ENCODE measurements at regions of chr17 and their contacts with region 1.

Region 1: GRCh38 chr17:38349097-38349730 is 2.4 kb upstream of the SOCS7 start:
- DNase-seq: peak; percentile 56 to 79
- ATAC-seq: peak; percentile 57 to 71
- H3K4me3 ChIP-seq: no peak overlapping the region
- H3K27ac ChIP-seq: peak overlapping the region in 1 of 4 donors; percentile 48
- H3K4me1 ChIP-seq: peaks cover 15 to 16% of the 10 kb centered on the region in 2 donors
- H3K27me3 ChIP-seq: no peaks in the 10 kb centered on the region
- CTCF ChIP-seq: peak; percentile 75 to 93 (median 84)
- POLR2A ChIP-seq: no peak

Region 2: GRCh38 chr17:38397227-38397626 is 48.0 kb after region 1 on chr17:
- in situ Hi-C with region 1: no loop called
- intact Hi-C with region 1: no loop called
- DNase-seq: no peak
- ATAC-seq: no peak
- H3K4me3 ChIP-seq: no peak overlapping the region
- H3K27ac ChIP-seq: no peak overlapping the region
- H3K4me1 ChIP-seq: no peaks in the 10 kb centered on the region
- H3K27me3 ChIP-seq: no peaks in the 10 kb centered on the region
- CTCF ChIP-seq: no peak
- POLR2A ChIP-seq: no peak

Region 3: DNA sequence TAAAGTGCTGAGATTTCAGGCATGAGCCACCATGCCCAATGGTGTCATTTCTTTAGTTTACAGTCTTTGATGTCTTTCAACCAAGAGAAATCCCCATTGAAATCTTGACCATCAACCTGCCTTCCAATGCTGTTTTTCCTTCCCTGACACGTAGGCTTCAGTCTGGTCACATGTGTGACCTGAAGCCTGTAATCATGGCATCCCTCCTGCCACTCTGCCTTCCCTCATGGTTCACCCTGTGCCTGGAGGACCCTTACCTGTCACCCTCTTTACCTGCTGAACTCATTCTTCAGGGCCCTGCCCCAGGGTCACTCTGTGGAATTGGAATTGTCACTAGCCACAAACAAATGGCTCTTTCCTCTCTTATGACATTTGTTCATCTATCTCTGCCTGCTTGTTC is 61.0 kb after region 1 on chr17:
- in situ Hi-C with region 1: loop called (anchors 5 kb)
- intact Hi-C with region 1: loop called (anchors 1 kb)
- DNase-seq: no peak
- ATAC-seq: no peak
- H3K4me3 ChIP-seq: no peak overlapping the region
- H3K27ac ChIP-seq: no peak overlapping the region
- H3K4me1 ChIP-seq: peaks cover under 1 to 8% of the 10 kb centered on the region in 2 donors
- H3K27me3 ChIP-seq: no peaks in the 10 kb centered on the region
- CTCF ChIP-seq: no peak
- POLR2A ChIP-seq: no peak

Region 4: DNA sequence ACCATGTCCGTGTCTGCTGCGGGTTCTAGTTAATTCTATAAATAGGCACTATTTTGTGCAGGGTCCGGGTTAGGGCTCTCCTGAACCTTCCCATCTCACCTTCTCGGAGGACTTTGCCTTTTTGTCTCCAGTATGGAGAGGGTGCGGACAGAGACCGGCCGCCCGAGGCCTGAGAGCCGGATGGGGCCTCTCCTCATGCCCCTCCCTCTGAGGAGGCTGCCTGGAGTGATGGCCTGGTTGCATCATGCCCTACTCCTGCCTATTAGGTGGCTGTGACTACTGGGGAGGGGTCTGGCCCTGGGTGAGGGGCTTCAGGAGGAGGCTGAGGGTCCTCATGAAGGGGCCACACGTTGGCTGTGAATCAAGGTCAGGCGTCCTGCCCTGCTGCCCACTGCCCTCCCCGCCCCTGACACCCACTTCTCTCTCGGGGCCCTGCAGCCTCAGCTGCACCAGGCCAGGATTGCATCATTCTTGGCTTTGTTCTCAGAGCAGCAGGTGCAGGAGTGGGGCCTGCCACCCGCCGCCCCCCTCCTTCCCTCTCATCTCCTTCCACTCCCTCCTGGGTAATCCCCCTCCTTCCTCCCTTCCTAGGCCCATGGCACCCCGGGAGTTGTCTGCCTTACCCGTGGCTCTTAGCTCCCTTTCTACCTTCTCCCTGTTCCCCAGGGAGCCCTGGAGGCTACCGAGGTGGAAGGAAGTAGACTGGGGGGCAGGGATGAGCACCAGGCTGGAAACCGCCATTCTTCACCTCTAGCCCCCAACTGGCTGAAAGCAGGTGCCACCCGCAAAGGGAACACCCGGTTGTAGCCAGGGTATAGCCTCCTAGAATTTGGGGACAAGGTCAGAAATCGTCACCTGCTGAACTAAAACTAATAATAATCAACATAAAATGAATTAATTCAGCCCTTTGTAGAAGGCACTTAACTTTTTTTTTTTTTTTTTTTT is 66.3 kb after region 1 on chr17:
- in situ Hi-C with region 1: loop called (anchors 5 kb)
- intact Hi-C with region 1: loop called (anchors 1 kb)
- DNase-seq: peak in 1 of 2 donors; percentile 55
- ATAC-seq: peak; percentile 59 to 85
- H3K4me3 ChIP-seq: peak overlapping the region; percentile 23 to 40 (median 26)
- H3K27ac ChIP-seq: peak overlapping the region in 3 of 4 donors; percentile 39 to 69 (median 60)
- H3K4me1 ChIP-seq: peaks cover 7 to 21% of the 10 kb centered on the region in 2 donors
- H3K27me3 ChIP-seq: peaks cover 9 to 13% (median 10%) of the 10 kb centered on the region in 3 donors
- CTCF ChIP-seq: no peak
- POLR2A ChIP-seq: no peak

Region 5: GRCh38 chr17:38584350-38584925 is 235.2 kb after region 1 on chr17:
- in situ Hi-C with region 1: no loop called
- intact Hi-C with region 1: no loop called
- DNase-seq: peak; percentile 10 to 19
- ATAC-seq: peak; percentile 66 to 72
- H3K4me3 ChIP-seq: no peak overlapping the region
- H3K27ac ChIP-seq: no peak overlapping the region
- H3K4me1 ChIP-seq: no peaks in the 10 kb centered on the region
- H3K27me3 ChIP-seq: peaks cover 9 to 19% (median 10%) of the 10 kb centered on the region in 3 donors
- CTCF ChIP-seq: peak; percentile 69 to 94 (median 87)
- POLR2A ChIP-seq: no peak

Measured in gastrocnemius medialis (tissue), 4 donors.